ENCODE measurements at regions of chr2 and their contacts with region 1.

Region 1: GRCh38 chr2:32063310-32064161 is at the start of gene SPAST:
- DNase-seq: peak; percentile 98 to 99
- H3K4me3 ChIP-seq: peak within 1 kb of the TSS; percentile 70 to 92 (median 75)
- H3K27ac ChIP-seq: peak within 1 kb of the TSS; percentile 84 to 89 (median 85)
- H3K4me1 ChIP-seq: peaks cover 12% of the 10 kb centered on the region in 2 donors
- H3K27me3 ChIP-seq: no peaks in the 10 kb centered on the region
- CTCF ChIP-seq: peak; percentile 32 to 89 (median 68)
- POLR2A ChIP-seq: peak in 1 of 2 donors; percentile 71
- total RNA-seq, gene SPAST: 20.5 to 34.3 (median 24.8) TPM

Region 2: DNA sequence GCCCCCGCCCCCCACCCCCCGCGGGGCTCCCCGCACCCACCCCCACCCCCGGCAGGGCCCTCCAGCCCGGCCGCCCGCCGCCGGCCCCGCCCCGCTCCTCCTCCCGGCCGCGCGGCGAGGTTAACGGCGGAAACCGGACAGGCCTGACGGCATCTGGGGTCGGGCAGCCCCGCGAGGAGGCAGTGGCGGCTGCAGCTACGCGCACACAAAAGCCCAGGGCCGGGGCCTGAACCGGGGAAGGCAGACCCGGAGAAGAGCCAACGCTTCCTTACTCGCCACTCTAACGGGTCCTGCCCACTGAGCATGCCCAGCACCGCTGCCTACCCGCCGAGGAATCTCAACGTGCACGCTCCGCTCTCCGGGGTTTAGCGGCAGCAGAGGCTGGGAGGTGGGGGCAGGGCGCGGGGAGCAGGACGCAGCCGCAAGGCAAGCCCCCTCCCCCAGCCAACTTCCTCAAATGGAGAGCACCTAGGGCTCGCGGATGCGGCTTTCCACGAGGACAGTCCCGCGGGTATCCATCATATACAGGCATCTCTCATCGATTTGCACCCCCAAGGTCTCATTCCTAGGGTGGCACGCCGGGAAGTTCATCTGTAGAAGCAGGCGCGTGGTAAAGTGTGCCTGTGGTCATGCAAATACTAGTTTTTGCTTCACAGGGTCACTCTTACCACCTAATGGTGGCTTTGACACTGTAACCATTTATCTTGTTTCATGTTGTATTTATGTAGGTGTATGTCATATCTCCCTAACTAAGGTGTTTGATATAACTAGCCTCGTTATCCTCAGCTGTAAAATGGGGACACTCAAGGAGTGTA is 52.7 kb before region 1 on chr2 and contains the start of gene MEMO1:
- intact Hi-C with region 1: loop called (anchors 10 kb)
- DNase-seq: peak; percentile 97 to 98
- H3K4me3 ChIP-seq: peak within 1 kb of the TSS; percentile 14 to 74 (median 37)
- H3K27ac ChIP-seq: peak within 1 kb of the TSS; percentile 82 to 91 (median 86)
- H3K4me1 ChIP-seq: peaks cover 4 to 12% of the 10 kb centered on the region in 2 donors
- H3K27me3 ChIP-seq: no peaks in the 10 kb centered on the region
- CTCF ChIP-seq: peak in 1 of 6 experiments; percentile 9
- POLR2A ChIP-seq: peak; percentile 32 to 63
- total RNA-seq, gene MEMO1: 16.3 to 28.7 (median 27.4) TPM

Region 3: GRCh38 chr2:32168513-32168912 is 105.0 kb after region 1 on chr2:
- intact Hi-C with region 1: loop called (anchors 10 kb)
- DNase-seq: no peak
- H3K4me3 ChIP-seq: no peak overlapping the region
- H3K27ac ChIP-seq: no peak overlapping the region
- H3K4me1 ChIP-seq: peaks cover 6 to 19% of the 10 kb centered on the region in 2 donors
- H3K27me3 ChIP-seq: no peaks in the 10 kb centered on the region
- CTCF ChIP-seq: no peak
- POLR2A ChIP-seq: no peak